Right ventricle myocardium superior (tissue), 1 donor: ENCODE measurements at regions of chr3 and their contacts with region 1.

Region 1: DNA sequence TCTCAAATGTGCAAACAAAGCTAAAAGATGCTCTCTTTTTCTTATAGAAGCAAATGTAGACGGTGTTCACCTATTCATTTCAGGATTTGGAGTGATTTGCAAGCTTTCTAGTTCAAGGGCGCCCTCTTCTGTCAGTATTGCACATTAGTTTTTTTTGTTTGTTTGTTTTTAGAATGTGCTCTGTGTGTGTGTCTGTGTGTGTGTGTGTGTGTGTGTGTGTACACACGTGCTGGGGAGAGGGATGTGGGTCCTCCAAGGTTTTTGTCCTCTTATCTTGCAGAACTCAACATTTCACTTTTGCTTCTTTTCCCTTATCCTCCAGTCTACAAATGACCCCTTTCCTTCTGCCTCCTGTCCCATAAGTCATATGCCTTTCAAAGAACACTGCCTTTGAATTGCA is 23.5 kb downstream of the DNAH1 start:
- DNase-seq: peak; percentile 4
- ATAC-seq: peak; percentile 69

Region 2: GRCh38 chr3:52225452-52226228 is 114.0 kb before region 1 on chr3 and contains the start of gene TLR9:
- intact Hi-C with region 1: loop called (anchors 5 kb)
- DNase-seq: no peak
- ATAC-seq: no peak
- total RNA-seq, gene TLR9: 0.32 TPM

Region 3: DNA sequence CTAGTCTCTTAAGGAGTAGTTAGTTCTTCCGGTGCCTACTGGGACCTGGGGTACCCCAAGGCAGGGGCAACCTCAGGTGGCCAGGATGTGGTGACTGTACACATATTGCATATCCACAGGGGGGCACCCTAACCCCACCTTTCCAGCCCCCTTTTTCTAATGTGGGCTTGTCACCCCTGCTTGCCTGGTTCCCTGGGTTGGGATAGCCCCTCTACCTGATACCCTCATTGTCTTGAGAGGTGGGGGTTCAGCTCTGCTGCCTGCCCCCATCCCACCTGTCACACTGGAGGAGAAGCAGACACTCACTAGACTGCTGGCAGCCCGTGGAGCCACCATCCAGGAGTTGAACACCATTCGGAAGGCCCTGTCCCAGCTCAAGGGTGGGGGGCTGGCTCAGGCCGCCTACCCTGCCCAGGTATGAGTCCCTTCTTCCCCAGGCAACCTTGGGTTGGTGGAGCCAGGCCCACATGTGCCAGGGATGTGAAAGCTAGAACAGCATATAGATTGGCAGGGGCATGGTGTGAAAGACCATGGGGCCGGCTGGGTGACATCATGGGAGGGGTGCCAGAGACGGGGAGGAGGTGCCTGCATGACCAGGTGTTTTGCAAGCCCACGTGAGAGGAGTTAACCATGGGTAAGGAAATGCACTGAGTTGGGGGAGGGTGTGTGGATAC is 48.0 kb before region 1 on chr3:
- intact Hi-C with region 1: loop called (anchors 5 kb)
- DNase-seq: no peak
- ATAC-seq: no peak

Region 4: GRCh38 chr3:52302426-52303145 is 37.0 kb before region 1 on chr3:
- intact Hi-C with region 1: no loop called
- DNase-seq: no peak
- ATAC-seq: no peak

Region 5: DNA sequence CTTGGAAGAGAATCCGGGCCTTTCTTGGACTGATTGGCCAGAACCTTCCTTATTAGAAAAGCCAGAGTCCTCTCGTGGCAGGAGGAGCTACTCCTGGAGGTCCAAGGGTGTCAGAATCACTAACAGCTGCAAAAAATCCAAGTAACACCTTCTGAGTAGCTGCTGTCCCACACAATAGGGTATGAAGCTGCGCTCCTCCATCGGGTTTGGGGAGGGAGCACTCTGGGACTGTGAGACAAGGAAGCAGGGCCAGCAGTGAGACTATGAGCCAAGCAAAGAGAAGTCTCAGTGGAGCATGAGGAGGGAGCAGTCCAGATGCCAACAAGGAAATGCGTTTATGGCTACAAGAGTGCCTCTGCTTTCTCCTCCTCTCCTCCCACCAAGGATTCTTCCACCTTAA is 83.6 kb after region 1 on chr3:
- intact Hi-C with region 1: no loop called
- DNase-seq: no peak
- ATAC-seq: peak; percentile 66